ENCODE measurements at regions of chr1 and their contacts with region 1.

Region 1: GRCh38 chr1:219812491-219813203 is 115.7 kb downstream of the SLC30A10 start:
- DNase-seq: peak; percentile 67
- H3K4me3 ChIP-seq: peak overlapping the region in 1 of 2 experiments; percentile 14; a peak in 1 of 4 replicates
- H3K27ac ChIP-seq: peak overlapping the region in 1 of 2 experiments; percentile 32; a peak in 2 of 4 replicates
- H3K4me1 ChIP-seq: peaks cover 4 to 5% of the 10 kb centered on the region in 2 experiments
- H3K27me3 ChIP-seq: no peaks in the 10 kb centered on the region
- CTCF ChIP-seq: peak; percentile 97
- EP300 ChIP-seq: peak in 1 of 2 experiments; percentile 27; a peak in 1 of 4 replicates
- RAD21 ChIP-seq: peak; percentile 100

Region 2: DNA sequence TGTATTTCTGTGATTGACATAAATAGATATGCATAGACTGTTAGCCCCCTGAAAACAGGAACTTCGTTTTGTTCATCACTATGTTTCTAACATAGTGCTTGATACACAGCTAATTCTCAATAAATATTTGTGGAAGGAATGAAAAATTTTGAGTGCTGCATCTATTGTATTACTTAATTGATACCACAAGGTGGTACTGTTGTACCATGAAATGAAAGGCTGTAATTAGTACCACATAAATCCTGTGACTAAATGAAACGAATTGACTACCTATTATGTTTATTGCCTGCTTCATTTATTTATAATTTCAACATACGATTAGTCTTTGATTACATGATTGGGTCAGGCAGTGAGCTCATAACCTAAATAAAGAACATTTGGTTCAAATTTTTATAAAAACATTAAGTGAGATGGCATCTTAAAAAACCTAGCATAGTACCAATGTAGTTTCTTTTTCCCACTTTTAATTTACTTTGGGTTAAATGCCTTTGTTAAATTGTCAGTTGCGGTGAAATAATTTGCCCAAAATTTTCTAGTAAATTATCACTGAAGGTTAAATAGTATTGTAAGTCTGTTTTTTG is 1482.5 kb before region 1 on chr1:
- CTCF ChIA-PET with region 1: interaction called, 31 read pairs
- POLR2A ChIA-PET with region 1: no interaction called
- DNase-seq: peak; percentile 56
- H3K4me3 ChIP-seq: no peak overlapping the region; a peak in 1 of 4 replicates
- H3K27ac ChIP-seq: peak overlapping the region in 1 of 2 experiments; percentile 31; a peak in 1 of 4 replicates
- H3K4me1 ChIP-seq: peaks cover 0 to 6% of the 10 kb centered on the region in 2 experiments; a peak in 2 of 4 replicates
- H3K27me3 ChIP-seq: no peaks in the 10 kb centered on the region
- CTCF ChIP-seq: peak; percentile 82
- EP300 ChIP-seq: no peak
- RAD21 ChIP-seq: peak; percentile 90

Region 3: DNA sequence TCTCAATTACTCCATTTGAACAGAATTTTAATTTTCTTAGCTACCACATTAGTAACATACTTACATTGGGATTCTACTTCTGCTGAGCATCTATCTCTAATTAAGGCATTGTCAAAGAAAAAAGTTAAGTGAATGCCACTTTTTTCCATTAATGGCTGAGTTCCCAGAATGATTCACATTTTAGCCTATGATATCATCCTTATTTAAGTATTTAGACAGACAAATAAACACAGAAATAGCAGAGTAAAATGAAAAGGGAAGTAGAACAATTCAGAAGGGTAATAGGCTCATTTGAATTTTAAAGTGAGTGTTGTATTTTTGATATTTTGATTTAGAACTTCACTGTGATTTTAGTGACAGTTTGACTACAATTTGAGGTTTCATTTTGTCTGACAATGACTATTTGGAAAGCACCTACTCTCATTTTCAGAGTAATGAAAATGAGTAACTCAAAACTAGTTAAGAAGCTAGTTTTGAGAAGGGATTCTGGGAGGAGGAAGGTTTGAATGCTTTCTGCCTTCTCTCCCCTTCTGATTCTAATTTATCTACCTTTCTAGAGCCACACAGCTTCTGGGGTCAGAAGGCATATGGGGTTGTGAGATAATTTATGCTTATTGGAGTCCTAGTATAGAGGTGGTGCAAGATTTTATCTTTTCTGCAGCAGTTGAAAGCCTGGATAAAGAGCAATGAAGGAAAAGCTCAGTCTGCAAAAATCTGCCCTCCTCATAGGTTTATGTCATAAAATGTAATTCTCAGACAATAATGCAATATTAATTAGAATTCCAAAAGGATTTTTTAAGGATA is 623.4 kb before region 1 on chr1:
- CTCF ChIA-PET with region 1: interaction called, 11 read pairs
- POLR2A ChIA-PET with region 1: no interaction called
- DNase-seq: no peak
- H3K4me3 ChIP-seq: peak overlapping the region; percentile 17 to 38; a peak in 2 of 4 replicates
- H3K27ac ChIP-seq: peak overlapping the region; percentile 89 to 90
- H3K4me1 ChIP-seq: peaks cover 22 to 24% of the 10 kb centered on the region in 2 experiments; a peak in 3 of 4 replicates
- H3K27me3 ChIP-seq: no peaks in the 10 kb centered on the region
- CTCF ChIP-seq: no peak
- EP300 ChIP-seq: peak in 1 of 2 experiments; percentile 65; a peak in 3 of 4 replicates
- RAD21 ChIP-seq: no peak

Region 4: GRCh38 chr1:219587805-219588561 is 224.7 kb before region 1 on chr1:
- CTCF ChIA-PET with region 1: interaction called, 16 read pairs
- POLR2A ChIA-PET with region 1: no interaction called
- DNase-seq: peak; percentile 70
- H3K4me3 ChIP-seq: no peak overlapping the region
- H3K27ac ChIP-seq: peak overlapping the region in 1 of 2 experiments; percentile 95; a peak in 3 of 4 replicates
- H3K4me1 ChIP-seq: peaks cover 6 to 25% of the 10 kb centered on the region in 2 experiments; a peak in 3 of 4 replicates
- H3K27me3 ChIP-seq: no peaks in the 10 kb centered on the region
- CTCF ChIP-seq: no peak
- EP300 ChIP-seq: peak; percentile 67 to 95; a peak in 3 of 4 replicates
- RAD21 ChIP-seq: peak; percentile 8; the same call in 1 of the 2 replicates

Region 5: DNA sequence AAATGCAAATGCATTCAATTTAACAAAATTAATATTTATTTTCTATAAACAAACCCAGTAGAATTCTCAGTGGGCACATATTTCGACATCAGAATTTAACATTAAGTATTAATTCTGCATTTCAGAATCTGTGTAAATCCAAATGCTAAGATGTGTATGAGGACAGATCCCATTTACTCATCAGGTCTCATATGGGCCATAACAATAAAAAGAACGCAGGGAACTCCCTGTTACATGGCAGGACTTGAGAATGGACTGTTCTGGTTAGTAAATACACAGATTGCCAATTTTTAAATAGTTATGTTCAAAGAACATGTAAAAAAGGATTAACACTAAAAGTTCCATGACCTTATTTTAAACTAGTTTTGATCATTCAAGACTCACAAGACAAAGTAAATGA is 11.7 kb after region 1 on chr1:
- CTCF ChIA-PET with region 1: interaction called, 15 read pairs
- POLR2A ChIA-PET with region 1: no interaction called
- DNase-seq: no peak
- H3K4me3 ChIP-seq: no peak overlapping the region
- H3K27ac ChIP-seq: no peak overlapping the region
- H3K4me1 ChIP-seq: peaks cover 0 to 4% of the 10 kb centered on the region in 2 experiments; a peak in 1 of 4 replicates
- H3K27me3 ChIP-seq: no peaks in the 10 kb centered on the region
- CTCF ChIP-seq: no peak
- EP300 ChIP-seq: no peak
- RAD21 ChIP-seq: no peak

Measured in SK-N-SH (cell line).